Psoas muscle (tissue), 8 donors: ENCODE measurements at regions of chr10 and their contacts with region 1.

Region 1: DNA sequence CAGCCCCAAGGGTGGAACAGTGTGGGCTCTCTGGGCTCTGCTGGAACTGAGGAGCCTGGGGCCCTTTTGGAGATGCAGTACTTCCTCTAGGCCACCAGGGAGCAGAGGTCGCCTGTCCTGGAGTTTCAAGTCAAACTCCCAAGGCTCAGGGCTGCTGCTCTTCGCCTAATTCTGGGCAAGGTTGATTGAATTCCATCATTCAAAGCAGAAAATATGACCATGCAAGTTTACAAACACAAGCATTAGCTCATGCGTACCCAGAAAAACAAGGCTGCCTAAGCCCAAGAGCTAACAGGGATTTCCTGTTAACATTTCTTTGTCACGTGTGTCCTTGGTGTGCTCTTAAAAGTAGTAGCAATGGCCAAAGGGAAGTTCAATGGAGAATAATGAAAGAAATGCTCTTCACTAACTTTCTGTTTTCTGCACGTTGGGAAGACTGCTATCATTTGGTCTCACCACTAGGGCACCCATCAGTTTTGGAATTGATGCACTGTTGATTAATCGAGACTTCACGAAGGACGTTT is 20.1 kb downstream of the LDB3 start:
- DNase-seq: peak in 1 of 2 donors; percentile 77
- ATAC-seq: peak; percentile 33 to 53 (median 45)
- H3K4me3 ChIP-seq: no peak overlapping the region
- H3K27ac ChIP-seq: no peak overlapping the region
- H3K4me1 ChIP-seq: peaks cover 66% of the 10 kb centered on the region
- H3K27me3 ChIP-seq: no peaks in the 10 kb centered on the region
- CTCF ChIP-seq: peak; percentile 84

Region 2: DNA sequence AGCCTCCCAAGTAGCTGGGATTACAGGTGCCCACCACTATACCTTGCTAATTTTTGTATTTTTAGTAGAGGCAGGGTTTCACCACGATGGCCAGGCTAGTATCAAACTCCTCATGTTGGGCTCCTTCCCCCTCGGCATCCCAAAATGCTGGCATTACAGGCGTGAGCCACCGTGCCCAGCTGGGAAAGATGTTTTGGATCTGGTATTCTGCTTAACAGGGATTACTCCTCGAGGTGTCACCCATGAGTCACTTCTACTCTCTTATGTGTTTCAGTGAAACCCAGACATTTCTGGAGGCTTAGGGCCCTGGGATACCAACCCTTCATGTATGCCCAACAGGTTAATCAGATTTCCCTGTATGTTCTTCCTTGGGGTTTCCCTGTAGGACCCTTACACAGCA is 46.0 kb before region 1 on chr10:
- intact Hi-C with region 1: loop called in 1 of 2 experiments (anchors 2 kb)
- DNase-seq: no peak
- ATAC-seq: peak in 3 of 4 donors; percentile 81 to 85 (median 84)
- H3K4me3 ChIP-seq: no peak overlapping the region
- H3K27ac ChIP-seq: peak overlapping the region; percentile 74
- H3K4me1 ChIP-seq: peaks cover 15% of the 10 kb centered on the region
- H3K27me3 ChIP-seq: no peaks in the 10 kb centered on the region
- CTCF ChIP-seq: no peak

Region 3: DNA sequence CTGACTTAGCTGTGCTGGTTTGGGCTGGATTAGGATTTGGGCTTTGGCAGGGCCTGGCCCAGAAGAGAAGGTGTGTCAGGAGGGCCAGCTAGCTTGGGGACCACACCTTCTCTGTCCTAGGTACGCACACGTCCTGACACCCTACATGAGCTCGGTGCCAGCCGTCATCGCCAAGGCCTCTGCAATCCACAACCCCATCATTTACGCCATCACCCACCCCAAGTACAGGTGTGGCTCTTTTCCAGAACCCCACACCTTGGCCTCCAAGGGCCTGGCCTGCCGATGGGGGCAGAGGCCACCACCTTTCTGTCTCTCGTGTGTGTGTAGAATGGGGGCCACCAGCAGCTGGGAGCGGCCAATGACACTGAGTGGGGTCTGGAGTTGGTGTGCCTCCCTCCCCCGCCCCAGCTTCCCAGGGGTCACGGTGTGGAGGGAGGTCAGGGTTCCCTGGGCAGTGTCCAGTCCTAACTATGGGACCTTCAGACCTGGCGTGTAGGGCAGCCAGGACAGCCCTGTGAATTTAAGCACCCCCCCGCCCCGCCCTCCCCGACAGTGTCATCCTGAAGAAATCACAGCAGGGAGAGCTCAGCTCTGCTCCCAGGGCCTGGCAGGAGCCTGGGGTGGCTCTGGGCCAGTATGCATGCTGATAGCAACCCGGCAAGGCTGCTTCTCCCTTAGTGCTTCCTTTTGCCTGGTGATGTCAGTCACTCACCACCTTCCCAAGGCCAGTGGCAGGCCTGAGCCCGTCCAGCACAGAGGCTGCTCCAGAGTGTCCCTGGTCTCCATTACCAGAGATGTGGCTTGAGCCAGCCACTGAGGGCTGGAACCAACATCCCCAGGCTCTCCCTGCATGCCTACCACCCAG is 27.1 kb before region 1 on chr10:
- intact Hi-C with region 1: loop called in 1 of 2 experiments (anchors 1 kb)
- DNase-seq: peak; percentile 84 to 96
- ATAC-seq: peak; percentile 77 to 86 (median 81)
- H3K4me3 ChIP-seq: no peak overlapping the region
- H3K27ac ChIP-seq: peak overlapping the region; percentile 92
- H3K4me1 ChIP-seq: peaks cover 50% of the 10 kb centered on the region
- H3K27me3 ChIP-seq: no peaks in the 10 kb centered on the region
- CTCF ChIP-seq: no peak

Region 4: GRCh38 chr10:86961556-86962091 is 273.2 kb after region 1 on chr10:
- intact Hi-C with region 1: loop called in 1 of 2 experiments (anchors 2 kb)
- DNase-seq: no peak
- ATAC-seq: no peak
- H3K4me3 ChIP-seq: no peak overlapping the region
- H3K27ac ChIP-seq: no peak overlapping the region
- H3K4me1 ChIP-seq: peaks cover 10% of the 10 kb centered on the region
- H3K27me3 ChIP-seq: no peaks in the 10 kb centered on the region
- CTCF ChIP-seq: no peak